Naive thymus-derived CD4-positive, alpha-beta T cell (primary cell): ENCODE measurements at regions of chr19 and their contacts with region 1.

Region 1: GRCh38 chr19:3304871-3305423 is 61.4 kb upstream of the NFIC start:
- DNase-seq: peak; percentile 57 to 80 (median 74)
- ATAC-seq: peak; percentile 76
- H3K4me3 ChIP-seq: no peak overlapping the region
- H3K4me3 Mint-ChIP-seq: peak overlapping the region in 1 of 10 donors; percentile 13
- H3K27ac ChIP-seq: no peak overlapping the region
- H3K27ac Mint-ChIP-seq: no peak overlapping the region
- H3K4me1 ChIP-seq: no peaks in the 10 kb centered on the region
- H3K4me1 Mint-ChIP-seq: peaks cover 0 to 5% (median 2%) of the 10 kb centered on the region in 7 donors
- H3K27me3 ChIP-seq: no peaks in the 10 kb centered on the region
- H3K27me3 Mint-ChIP-seq: peaks cover 5 to 26% (median 20%) of the 10 kb centered on the region in 5 donors

Region 2: DNA sequence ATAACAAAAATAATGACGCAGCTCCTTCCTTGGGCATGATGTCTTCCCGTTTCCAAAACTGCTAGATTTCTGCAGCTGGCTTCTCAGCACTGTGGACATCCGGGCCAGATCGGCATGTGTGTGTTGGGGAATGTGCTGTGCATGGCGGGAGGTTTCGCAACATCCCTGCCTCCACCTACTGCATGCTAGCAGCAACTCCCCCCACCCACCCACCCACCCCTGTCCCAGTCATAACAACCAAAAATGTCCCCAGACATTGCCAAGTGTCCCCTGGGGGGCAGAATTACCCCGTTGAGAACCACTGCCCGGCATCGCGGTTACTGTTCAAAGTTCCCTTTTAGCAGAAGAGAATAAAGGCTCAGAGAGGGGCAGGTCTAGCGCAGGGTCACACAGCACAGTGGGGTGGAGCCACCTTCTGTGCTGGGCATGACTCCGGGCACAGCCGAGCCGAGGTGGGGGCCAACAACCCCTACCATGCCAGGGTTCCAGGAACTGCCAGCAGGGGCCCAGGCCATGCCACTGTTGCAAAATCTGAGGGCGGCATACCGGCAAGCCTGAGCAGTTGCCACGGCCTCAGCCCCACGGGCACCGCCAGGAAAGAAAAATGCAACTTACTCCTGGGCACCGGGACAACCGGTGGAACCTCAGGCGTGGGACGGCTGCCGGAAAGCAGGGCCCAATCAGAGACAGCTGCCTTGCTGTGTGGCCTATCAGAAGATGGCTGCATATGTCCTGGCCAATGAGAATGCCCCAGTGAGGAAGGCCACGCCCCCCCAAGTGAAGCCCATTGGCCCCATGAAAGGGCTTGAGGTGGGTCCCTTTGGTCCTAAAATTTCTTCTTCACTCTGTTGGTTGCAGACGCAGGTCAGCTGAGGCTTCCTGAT is 38.9 kb after region 1 on chr19:
- CTCF ChIA-PET with region 1: no interaction called
- POLR2A ChIA-PET with region 1: no interaction called
- intact Hi-C with region 1: no loop called
- DNase-seq: peak in 5 of 9 donors; percentile 27 to 56 (median 44)
- ATAC-seq: peak; percentile 94
- H3K4me3 ChIP-seq: peak overlapping the region; percentile 41
- H3K4me3 Mint-ChIP-seq: peak overlapping the region in 6 of 10 donors; percentile 38 to 77 (median 51)
- H3K27ac ChIP-seq: no peak overlapping the region
- H3K27ac Mint-ChIP-seq: peak overlapping the region in 6 of 9 donors; percentile 17 to 81 (median 42)
- H3K4me1 ChIP-seq: peaks cover 2% of the 10 kb centered on the region in 2 donors
- H3K4me1 Mint-ChIP-seq: peaks cover 0 to 10% (median 2%) of the 10 kb centered on the region in 7 donors
- H3K27me3 ChIP-seq: no peaks in the 10 kb centered on the region
- H3K27me3 Mint-ChIP-seq: no peaks in the 10 kb centered on the region

Region 3: GRCh38 chr19:3471954-3472655 is 167.2 kb after region 1 on chr19:
- CTCF ChIA-PET with region 1: interaction called, 5 read pairs
- POLR2A ChIA-PET with region 1: no interaction called
- intact Hi-C with region 1: loop called in 1 of 2 experiments (anchors 1 kb)
- DNase-seq: peak in 3 of 9 donors; percentile 35 to 57 (median 44)
- ATAC-seq: peak; percentile 36
- H3K4me3 ChIP-seq: no peak overlapping the region
- H3K4me3 Mint-ChIP-seq: no peak overlapping the region
- H3K27ac ChIP-seq: no peak overlapping the region
- H3K27ac Mint-ChIP-seq: no peak overlapping the region
- H3K4me1 ChIP-seq: no peaks in the 10 kb centered on the region
- H3K4me1 Mint-ChIP-seq: peaks cover 0 to 7% (median 0%) of the 10 kb centered on the region in 7 donors
- H3K27me3 ChIP-seq: no peaks in the 10 kb centered on the region
- H3K27me3 Mint-ChIP-seq: no peaks in the 10 kb centered on the region

Region 4: DNA sequence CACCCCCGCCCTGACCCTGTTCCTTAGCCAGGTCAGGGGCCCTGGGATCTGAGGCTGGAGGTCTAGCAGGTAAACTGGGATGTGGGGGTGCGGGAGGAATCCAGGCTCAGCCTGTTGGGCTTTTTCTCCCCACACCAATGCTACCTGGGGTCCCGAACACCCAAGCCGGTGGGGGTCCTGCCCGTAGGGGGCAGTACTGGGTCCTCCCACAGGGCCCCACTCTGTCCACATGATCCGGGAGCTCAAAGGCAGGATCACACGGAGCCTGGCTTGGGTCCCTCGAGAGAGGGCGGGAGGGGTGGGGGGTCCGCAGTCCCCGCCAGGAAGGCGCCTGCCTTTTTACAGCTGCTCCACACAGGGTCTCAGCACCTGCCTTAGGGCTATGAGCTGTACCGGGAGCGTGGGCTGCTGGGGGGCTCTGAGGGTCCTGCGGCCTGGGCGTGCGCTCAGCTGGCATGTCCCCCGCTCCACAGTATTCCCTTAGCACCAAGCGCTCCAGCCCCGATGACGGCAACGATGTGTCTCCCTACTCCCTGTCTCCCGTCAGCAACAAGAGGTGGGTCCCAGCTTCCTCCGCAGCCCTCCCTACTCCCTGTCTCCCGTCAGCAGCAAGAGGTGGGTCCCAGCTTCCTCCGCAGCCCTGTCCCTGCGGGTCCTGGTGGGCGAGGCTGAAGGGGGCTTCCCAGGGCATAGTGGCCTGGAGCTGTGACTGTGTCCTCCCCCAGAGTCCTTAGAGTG is 221.7 kb after region 1 on chr19:
- CTCF ChIA-PET with region 1: no interaction called
- POLR2A ChIA-PET with region 1: no interaction called
- intact Hi-C with region 1: no loop called
- DNase-seq: no peak
- ATAC-seq: no peak
- H3K4me3 ChIP-seq: no peak overlapping the region
- H3K4me3 Mint-ChIP-seq: no peak overlapping the region
- H3K27ac ChIP-seq: no peak overlapping the region
- H3K27ac Mint-ChIP-seq: no peak overlapping the region
- H3K4me1 ChIP-seq: no peaks in the 10 kb centered on the region
- H3K4me1 Mint-ChIP-seq: peaks cover 0 to 3% (median 0%) of the 10 kb centered on the region in 7 donors
- H3K27me3 ChIP-seq: no peaks in the 10 kb centered on the region
- H3K27me3 Mint-ChIP-seq: no peaks in the 10 kb centered on the region